Activated CD4-positive, alpha-beta T cell treated with anti-CD3 and anti-CD28 coated beads, Interleukin-2, amount 10 ng/mL, durations not matched to agents 24 days and 14 days (primary cell): ENCODE measurements at regions of chr3 and their contacts with region 1.

Region 1: GRCh38 chr3:141575879-141576743 is 89.3 kb downstream of the RASA2 start:
- DNase-seq: no peak
- H3K4me3 Mint-ChIP-seq: peak overlapping the region; percentile 20
- H3K27ac Mint-ChIP-seq: peak overlapping the region; percentile 8
- H3K4me1 Mint-ChIP-seq: peaks cover 7% of the 10 kb centered on the region
- H3K27me3 Mint-ChIP-seq: no peaks in the 10 kb centered on the region

Region 2: DNA sequence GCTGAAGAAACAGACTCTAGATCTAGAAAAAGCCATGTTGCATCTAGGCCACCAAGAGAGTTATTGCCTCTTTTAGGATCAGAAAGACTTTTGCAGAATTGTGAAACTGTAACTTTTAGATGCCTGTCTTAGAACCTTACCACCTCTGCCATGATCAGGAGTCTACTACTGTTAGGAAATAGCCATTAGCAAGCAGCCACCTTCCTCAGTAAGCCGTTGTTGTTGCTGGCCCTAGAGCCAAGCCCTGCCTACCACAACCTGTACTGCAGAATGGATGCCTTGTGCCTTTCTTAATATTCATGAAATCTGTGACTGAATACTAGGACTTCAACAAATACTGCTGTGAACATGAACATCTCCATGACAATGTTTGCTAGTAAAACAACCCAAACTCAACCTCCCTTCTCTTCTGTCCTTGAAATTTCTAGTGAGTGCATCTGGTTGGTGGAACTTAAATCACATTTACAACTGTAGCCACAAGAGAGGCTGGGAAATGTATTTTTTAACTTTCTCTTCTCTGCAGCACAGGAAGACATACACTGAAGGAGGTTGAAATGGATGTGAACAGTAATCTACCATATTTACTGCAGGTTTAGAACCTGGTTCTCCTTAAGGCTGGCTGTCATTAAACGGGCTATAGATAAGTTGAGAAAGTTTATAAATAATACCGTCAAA is 68.6 kb before region 1 on chr3:
- intact Hi-C with region 1: no loop called
- DNase-seq: peak; percentile 54
- H3K4me3 Mint-ChIP-seq: no peak overlapping the region
- H3K27ac Mint-ChIP-seq: no peak overlapping the region
- H3K4me1 Mint-ChIP-seq: peaks cover 26% of the 10 kb centered on the region
- H3K27me3 Mint-ChIP-seq: no peaks in the 10 kb centered on the region

Region 3: DNA sequence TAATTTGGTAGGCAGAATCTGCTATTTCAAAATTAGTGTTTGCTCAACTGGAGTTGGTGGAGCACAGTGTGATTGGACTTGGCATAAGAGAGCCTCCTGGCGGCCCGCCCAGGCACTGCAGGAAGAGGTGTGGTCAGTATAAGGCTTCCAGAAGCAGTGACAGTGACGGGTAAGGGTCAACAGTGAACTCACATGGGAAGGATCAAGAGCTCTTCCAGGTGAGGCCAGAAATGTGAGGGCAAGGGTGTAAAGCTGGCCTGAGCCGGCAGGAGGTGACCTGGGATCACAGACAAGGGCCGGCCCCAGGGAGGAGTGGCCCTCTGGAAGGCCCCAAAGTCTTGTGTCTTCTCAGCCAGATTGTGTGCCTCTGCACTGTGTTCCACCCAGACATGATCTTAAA is 68.8 kb after region 1 on chr3:
- intact Hi-C with region 1: loop called (anchors 5 kb)
- DNase-seq: peak; percentile 91
- H3K4me3 Mint-ChIP-seq: no peak overlapping the region
- H3K27ac Mint-ChIP-seq: no peak overlapping the region
- H3K4me1 Mint-ChIP-seq: no peaks in the 10 kb centered on the region
- H3K27me3 Mint-ChIP-seq: peaks cover 2% of the 10 kb centered on the region

Region 4: GRCh38 chr3:141913150-141913811 is 337.2 kb after region 1 on chr3:
- intact Hi-C with region 1: loop called (anchors 10 kb)
- DNase-seq: peak; percentile 86
- H3K4me3 Mint-ChIP-seq: no peak overlapping the region
- H3K27ac Mint-ChIP-seq: peak overlapping the region; percentile 12
- H3K4me1 Mint-ChIP-seq: peaks cover 6% of the 10 kb centered on the region
- H3K27me3 Mint-ChIP-seq: no peaks in the 10 kb centered on the region

Region 5: GRCh38 chr3:141998669-141999290 is 422.7 kb after region 1 on chr3:
- intact Hi-C with region 1: loop called (anchors 2 kb)
- DNase-seq: no peak
- H3K4me3 Mint-ChIP-seq: no peak overlapping the region
- H3K27ac Mint-ChIP-seq: no peak overlapping the region
- H3K4me1 Mint-ChIP-seq: no peaks in the 10 kb centered on the region
- H3K27me3 Mint-ChIP-seq: no peaks in the 10 kb centered on the region